Activated CD4-positive, alpha-beta memory T cell treated with anti-CD3 and anti-CD28 coated beads for 36 hours (primary cell): ENCODE measurements at regions of chr19 and their contacts with region 1.

Region 1: DNA sequence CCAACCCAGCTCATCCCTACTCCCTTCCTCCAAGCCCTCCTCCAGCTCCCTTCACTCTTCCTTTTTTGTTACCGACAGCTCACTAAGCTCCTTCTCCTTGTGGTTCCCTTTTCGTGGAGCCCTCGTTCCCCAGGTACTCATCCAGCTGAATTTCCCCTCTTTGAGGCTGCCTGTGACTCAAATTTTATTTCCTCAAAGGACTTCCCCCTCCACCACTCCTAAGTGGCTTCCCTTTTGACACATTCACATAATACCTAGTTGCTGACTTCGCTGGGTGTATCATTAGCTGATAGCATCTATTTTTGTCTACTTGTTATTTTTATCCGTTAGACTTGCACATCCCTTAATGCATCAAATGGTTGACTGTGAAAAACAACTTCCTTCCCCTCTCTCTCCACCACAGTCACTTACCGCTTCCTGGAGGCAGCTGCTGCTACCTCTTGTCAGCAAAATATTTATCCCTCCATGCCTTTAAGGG is 14.5 kb downstream of the FFAR2 start:
- DNase-seq: peak; percentile 56
- H3K4me3 Mint-ChIP-seq: peak overlapping the region; percentile 18
- H3K27ac Mint-ChIP-seq: peak overlapping the region; percentile 76
- H3K4me1 Mint-ChIP-seq: peaks cover 29% of the 10 kb centered on the region
- H3K27me3 Mint-ChIP-seq: peaks cover 2% of the 10 kb centered on the region

Region 2: GRCh38 chr19:35419003-35419402 is 43.5 kb before region 1 on chr19:
- CTCF ChIA-PET with region 1: no interaction called
- POLR2A ChIA-PET with region 1: no interaction called
- intact Hi-C with region 1: no loop called
- DNase-seq: no peak
- H3K4me3 Mint-ChIP-seq: no peak overlapping the region
- H3K27ac Mint-ChIP-seq: no peak overlapping the region
- H3K4me1 Mint-ChIP-seq: no peaks in the 10 kb centered on the region
- H3K27me3 Mint-ChIP-seq: peaks cover 20% of the 10 kb centered on the region

Region 3: DNA sequence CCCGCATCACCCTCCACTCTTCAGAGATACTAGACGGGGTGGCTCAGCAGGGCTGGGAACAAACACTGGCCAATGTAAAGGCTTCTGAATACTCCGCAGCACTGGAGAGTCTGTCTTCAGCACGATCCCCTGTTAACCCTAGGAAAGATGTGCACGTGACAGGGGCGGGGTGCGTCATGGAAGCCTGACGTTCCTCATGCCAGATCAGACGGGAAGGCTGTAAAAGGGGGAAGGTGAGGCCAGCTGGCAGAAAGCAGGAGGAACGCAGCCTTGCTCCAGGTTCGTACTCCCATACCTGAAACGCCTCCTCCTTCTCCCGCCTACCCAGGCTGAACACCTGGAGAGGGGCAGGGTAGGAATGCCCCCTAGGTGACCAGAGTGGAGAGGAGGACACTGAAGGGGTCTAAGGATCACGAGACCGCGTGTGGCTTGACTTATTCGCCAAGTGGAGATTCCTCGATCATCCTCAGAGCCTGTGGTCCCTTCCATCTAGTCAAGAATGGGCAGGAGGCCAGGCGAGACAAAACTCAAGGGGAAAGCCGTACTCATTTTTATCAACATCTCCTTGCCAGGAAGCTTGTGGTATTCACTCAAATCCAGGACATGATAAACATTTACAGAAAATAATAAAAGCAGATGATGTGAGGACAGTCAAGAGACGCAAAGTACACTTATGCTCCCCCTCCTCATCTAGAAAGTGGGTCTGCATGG is 32.7 kb before region 1 on chr19:
- CTCF ChIA-PET with region 1: no interaction called
- POLR2A ChIA-PET with region 1: no interaction called
- intact Hi-C with region 1: no loop called
- DNase-seq: no peak
- H3K4me3 Mint-ChIP-seq: no peak overlapping the region
- H3K27ac Mint-ChIP-seq: no peak overlapping the region
- H3K4me1 Mint-ChIP-seq: no peaks in the 10 kb centered on the region
- H3K27me3 Mint-ChIP-seq: peaks cover 5% of the 10 kb centered on the region

Region 4: DNA sequence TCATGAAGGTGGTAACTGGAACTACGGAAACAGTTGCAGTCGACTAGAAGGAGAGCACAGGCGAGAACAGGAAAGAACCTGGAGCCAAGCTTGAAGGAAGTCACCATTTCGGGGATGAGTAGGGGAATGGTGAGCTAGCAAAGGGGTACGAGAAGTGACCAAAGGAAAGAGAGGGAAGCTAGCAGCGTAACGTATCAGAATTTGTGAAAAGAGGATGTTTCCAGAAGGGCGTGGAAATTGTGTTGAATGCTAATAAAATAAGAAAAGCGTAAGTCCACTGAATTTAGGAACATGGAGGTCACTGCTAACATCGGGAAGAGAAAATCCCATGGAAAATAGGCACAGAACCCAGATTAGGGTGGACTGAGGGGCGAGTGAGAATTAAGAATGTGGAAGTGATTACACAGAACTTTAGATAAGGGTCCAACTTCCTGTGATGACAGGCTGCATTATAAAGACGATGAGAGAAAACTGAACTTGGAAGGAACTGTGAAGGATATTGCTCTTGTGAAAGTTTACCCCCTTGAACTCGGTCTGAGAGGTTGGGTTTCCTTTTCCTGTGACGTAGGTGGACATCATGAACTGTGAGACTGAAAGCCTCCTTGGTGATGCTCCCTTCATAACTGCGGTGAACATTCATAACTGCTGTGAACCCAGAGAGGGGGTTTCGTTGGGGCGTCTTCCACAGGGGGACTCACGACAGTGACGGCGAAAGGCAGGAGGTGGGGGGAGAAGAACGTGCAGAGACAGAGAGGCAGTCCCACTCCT is 16.5 kb before region 1 on chr19:
- CTCF ChIA-PET with region 1: interaction called, 4 read pairs
- POLR2A ChIA-PET with region 1: interaction called, 7 read pairs
- intact Hi-C with region 1: loop called (anchors 1 kb)
- DNase-seq: peak; percentile 65
- H3K4me3 Mint-ChIP-seq: no peak overlapping the region
- H3K27ac Mint-ChIP-seq: no peak overlapping the region
- H3K4me1 Mint-ChIP-seq: peaks cover 37% of the 10 kb centered on the region
- H3K27me3 Mint-ChIP-seq: peaks cover 16% of the 10 kb centered on the region

Region 5: GRCh38 chr19:35528218-35529038 is 65.9 kb after region 1 on chr19 and contains the start of gene SBSN:
- CTCF ChIA-PET with region 1: no interaction called
- POLR2A ChIA-PET with region 1: no interaction called
- intact Hi-C with region 1: no loop called
- DNase-seq: no peak
- H3K4me3 Mint-ChIP-seq: no peak within 1 kb of the TSS
- H3K27ac Mint-ChIP-seq: no peak within 1 kb of the TSS
- H3K4me1 Mint-ChIP-seq: peaks cover 6% of the 10 kb centered on the region
- H3K27me3 Mint-ChIP-seq: peaks cover 47% of the 10 kb centered on the region
- total RNA-seq, gene SBSN: 0.10 TPM in 1 of 2 experiments, not detected in the other

Region 6: DNA sequence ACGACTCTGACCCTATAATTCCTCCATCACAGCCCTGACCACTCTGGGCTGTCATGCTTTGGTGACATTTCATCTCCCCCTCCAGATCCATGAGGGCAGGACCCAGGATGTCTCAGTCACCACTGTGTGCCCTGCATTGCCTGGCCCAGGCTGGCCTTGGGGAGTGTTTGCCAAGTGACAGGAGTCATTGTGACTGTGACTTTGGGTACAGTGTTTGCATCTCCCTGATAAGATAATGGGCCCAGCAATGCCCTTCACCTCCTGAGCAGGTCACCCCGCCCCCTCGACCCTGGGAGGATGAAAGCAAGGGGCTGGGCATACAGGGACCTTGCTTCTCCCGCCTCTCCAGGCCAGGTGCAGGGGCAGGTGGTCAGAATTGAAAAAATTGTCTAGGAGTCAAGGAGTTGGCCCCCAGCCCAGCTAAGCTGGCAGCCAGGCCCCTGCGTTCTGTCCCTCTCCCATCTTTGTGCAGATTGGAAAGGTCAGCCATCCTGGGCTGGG is 106.8 kb after region 1 on chr19:
- CTCF ChIA-PET with region 1: no interaction called
- POLR2A ChIA-PET with region 1: no interaction called
- intact Hi-C with region 1: no loop called
- DNase-seq: no peak
- H3K4me3 Mint-ChIP-seq: no peak overlapping the region
- H3K27ac Mint-ChIP-seq: no peak overlapping the region
- H3K4me1 Mint-ChIP-seq: no peaks in the 10 kb centered on the region
- H3K27me3 Mint-ChIP-seq: peaks cover 27% of the 10 kb centered on the region